Posterior vena cava (tissue), 2 donors: ENCODE measurements at regions of chr5 and their contacts with region 1.

Region 1: DNA sequence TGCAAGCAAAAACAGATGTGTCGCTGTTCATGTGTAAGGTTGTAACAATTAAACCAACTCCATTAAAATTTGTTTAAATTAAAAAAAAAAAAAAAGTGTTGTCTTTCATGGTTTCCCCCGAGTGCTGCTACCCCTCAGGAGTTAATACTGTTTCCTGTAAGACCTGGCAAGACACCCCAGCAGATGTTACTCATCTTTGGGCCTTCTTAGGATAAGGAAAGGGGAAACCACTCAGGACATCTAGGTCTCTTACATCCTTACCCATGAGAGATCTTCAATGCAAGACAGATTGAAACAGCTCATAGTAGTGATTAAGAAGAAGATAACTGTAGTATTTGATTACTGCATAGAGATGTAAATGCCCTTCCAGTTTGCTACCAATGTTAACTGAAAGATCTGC is 33.5 kb upstream of the F2R start:
- DNase-seq: no peak

Region 2: DNA sequence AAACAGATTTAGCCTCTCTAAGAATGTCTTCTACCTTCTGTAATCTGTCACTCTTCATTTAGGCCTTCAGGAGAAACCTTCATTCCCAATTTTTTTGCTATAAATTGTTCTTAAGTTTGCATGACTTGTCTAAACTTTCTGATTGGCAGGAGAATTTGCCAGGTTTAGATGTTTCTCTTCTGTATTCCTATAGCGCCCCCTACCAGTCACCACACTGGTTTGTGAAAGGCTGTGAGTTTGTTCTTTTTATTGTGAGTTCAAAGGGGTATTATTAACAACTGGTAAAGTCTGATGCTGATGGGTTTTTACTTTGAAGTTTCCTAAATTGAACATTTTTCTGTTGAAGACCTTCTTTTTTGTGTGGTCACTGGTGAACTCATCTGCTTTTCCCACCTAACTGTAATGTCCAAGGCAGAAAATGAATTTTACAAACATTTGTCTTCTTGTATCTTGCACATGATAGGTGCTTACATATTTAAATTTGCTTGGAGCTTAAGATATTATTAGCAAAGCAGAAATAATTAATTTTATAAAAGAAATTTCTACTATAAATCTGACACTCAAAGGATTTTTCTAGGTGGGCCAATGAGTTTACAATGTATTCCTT is 40.8 kb before region 1 on chr5:
- intact Hi-C with region 1: no loop called
- DNase-seq: no peak

Region 3: DNA sequence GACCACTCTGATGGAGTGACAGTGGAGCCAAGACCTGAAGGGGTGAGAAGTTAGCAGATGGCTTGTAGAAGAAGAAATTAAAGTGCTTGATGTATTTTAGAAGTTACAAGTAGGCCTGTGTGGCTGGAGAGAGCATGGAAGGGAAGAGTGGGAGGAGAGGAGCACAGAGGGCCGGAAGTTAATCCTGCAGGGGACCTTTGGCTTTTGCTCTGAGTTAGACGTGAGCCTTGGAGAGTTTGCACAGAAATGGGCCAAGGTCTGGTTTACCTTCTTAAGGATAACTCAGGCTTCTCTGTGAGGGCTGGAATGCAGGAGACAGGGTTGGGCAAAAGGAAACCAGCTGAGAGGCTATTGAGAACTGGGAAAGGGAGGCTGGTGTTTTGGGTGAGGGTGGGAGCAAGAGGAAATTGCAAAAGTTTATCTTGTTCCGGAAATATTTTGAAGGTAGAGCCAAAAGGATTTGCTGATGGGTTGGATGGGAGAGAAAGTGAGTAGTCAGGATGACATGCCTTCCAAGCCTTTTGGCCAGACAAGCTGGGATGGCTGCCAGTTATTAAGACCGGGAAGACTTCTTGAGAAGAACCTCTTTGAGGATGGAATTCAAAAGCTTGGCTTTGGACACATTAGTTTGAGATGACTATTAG is 118.9 kb after region 1 on chr5:
- intact Hi-C with region 1: no loop called
- DNase-seq: peak; percentile 82

Region 4: DNA sequence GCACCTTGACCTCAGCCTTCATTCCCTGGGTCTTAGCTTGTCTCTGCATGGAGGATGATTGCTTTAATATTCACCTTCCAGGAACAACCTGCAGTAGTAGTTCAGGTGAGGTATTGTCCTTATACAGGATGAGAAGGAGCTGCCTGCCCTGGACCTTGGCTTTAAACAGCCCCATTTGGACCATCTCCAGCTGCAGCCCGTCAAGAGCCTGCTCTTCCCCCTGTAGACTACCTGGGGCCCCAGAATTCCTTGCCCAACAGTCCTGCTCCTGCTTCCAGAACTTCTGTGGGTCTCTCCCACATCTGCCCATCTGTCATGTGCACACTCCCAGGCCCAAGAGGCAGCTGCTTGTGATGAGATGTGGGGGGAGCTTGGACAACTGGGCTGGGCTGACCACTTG is 968.3 kb after region 1 on chr5:
- intact Hi-C with region 1: loop called in 1 of 2 experiments (anchors 5 kb)
- DNase-seq: no peak